ENCODE measurements at regions of chr12 and their contacts with region 1.

Region 1: DNA sequence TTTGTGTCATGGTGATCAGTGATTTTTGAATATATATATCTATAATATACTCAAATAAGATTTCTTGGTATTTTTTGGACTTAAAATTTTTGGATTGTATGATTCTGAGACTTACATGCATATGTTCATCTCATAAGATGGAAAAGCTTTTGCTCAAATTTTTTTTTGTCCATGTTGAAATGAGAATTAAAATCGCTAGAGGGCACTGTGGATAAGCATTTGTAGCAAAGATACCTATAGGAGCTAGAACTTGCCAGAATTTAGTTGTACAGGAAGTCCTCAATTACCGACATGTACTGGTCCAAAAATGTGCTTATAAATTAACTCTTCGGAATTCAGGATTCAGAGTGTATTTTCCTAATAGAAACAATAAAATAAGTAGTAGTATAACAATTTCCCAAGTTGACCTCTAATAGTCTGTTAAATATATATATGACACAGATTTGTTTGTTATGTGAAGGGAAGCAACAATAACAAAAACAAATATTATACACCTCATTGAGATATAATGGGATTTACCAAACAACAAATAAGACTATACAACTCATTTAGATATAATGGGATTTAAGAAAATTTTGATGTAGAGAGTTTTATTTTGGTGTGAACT is 179.6 kb downstream of the TMEM117 start:
- DNase-seq: no peak
- H3K4me3 ChIP-seq: no peak overlapping the region
- H3K27ac ChIP-seq: peak overlapping the region in 10 of 59 donors; percentile 25 to 67 (median 34)
- H3K27me3 ChIP-seq: no peaks in the 10 kb centered on the region
- CTCF ChIP-seq: peak; percentile 41 to 88 (median 68)

Region 2: DNA sequence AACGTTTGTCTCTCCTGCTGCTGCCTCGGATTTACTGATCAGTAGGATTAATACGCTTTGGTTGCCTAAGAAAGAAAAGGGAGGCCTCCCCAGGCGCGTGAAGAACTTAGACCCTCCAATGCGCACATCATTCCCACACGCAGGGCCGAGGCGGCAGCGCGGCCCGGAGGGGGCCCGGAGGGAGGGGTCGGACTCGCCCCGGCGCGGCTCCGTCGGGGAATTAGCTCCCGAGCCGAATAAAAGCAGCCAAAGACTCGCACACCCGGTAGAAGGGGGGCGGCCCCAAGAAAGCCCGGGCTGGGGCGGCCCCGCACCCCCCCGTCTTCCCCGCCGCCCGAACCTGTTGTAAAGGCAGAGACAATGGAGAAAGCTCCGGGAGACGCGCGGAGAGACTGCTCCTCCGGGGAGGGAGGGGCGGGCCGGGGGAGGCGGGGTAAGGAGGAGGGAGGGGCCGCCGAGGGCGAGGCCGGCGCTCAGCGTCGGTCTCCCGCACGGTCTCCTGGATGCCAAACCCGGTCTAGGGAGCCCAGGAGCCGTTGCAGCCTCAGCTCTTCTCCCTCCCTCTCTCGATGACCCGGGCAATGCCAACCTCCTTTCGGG is 860.6 kb after region 1 on chr12 and contains the start of gene NELL2:
- intact Hi-C with region 1: loop called in 1 of 2 experiments (anchors 5 kb)
- DNase-seq: peak in 9 of 10 donors; percentile 37 to 80 (median 69)
- H3K4me3 ChIP-seq: peak within 1 kb of the TSS; percentile 46 to 86 (median 69)
- H3K27ac ChIP-seq: peak within 1 kb of the TSS in 54 of 59 donors; percentile 8 to 83 (median 69)
- H3K27me3 ChIP-seq: peaks cover 0 to 10% (median 0%) of the 10 kb centered on the region in 45 donors
- CTCF ChIP-seq: no peak
- total RNA-seq, gene NELL2: 95.5 to 433 (median 285) TPM

Measured in dorsolateral prefrontal cortex (tissue), 120 donors.